ENCODE measurements at regions of chr13 and their contacts with region 1.

Region 1: GRCh38 chr13:40352380-40352778 is 314.1 kb downstream of the FOXO1 start:
- DNase-seq: peak; percentile 91 to 97
- ATAC-seq: peak; percentile 70 to 76
- H3K4me3 ChIP-seq: peak overlapping the region in 1 of 4 donors; percentile 29
- H3K27ac ChIP-seq: peak overlapping the region; percentile 88 to 98 (median 94)
- H3K4me1 ChIP-seq: peaks cover 35 to 36% of the 10 kb centered on the region in 2 donors
- H3K27me3 ChIP-seq: no peaks in the 10 kb centered on the region
- CTCF ChIP-seq: no peak
- POLR2A ChIP-seq: peak in 1 of 2 donors; percentile 22

Region 2: DNA sequence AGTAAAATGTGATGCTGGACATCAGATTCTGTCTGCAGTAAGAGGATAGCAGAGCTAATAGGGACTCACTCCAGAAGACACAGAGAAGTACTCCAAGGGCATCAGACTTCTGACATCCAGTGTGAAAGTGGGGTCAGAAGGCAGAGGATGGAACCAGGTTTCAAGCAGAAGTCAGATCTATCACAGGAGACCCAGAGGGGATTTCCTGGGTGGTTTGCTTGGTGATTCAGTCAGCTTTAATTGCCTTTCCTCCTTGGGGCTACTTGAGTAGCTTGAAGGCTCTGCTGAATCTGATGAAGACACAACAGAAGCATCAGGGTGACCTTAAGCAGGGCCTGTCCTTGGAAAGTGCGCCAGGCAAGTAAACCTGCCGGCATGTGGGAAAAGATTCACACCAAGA is 396.3 kb before region 1 on chr13:
- in situ Hi-C with region 1: no loop called
- intact Hi-C with region 1: no loop called
- DNase-seq: no peak
- ATAC-seq: no peak
- H3K4me3 ChIP-seq: no peak overlapping the region
- H3K27ac ChIP-seq: no peak overlapping the region
- H3K4me1 ChIP-seq: peaks cover 0 to 4% of the 10 kb centered on the region in 2 donors
- H3K27me3 ChIP-seq: no peaks in the 10 kb centered on the region
- CTCF ChIP-seq: no peak
- POLR2A ChIP-seq: no peak

Region 3: GRCh38 chr13:40236566-40237168 is 115.7 kb before region 1 on chr13:
- in situ Hi-C with region 1: loop called in 3 of 4 experiments (anchors 5 to 10 kb)
- intact Hi-C with region 1: loop called (anchors 1 kb)
- DNase-seq: peak; percentile 93 to 95
- ATAC-seq: peak; percentile 64 to 75
- H3K4me3 ChIP-seq: peak overlapping the region in 2 of 4 donors; percentile 21 to 26
- H3K27ac ChIP-seq: peak overlapping the region; percentile 97 to 99 (median 98)
- H3K4me1 ChIP-seq: peaks cover 50 to 56% of the 10 kb centered on the region in 2 donors
- H3K27me3 ChIP-seq: no peaks in the 10 kb centered on the region
- CTCF ChIP-seq: peak in 1 of 5 experiments; percentile 12
- POLR2A ChIP-seq: peak; percentile 73 to 86

Region 4: GRCh38 chr13:40251343-40252032 is 100.9 kb before region 1 on chr13:
- in situ Hi-C with region 1: no loop called
- intact Hi-C with region 1: loop called (anchors 5 kb)
- DNase-seq: no peak
- ATAC-seq: peak; percentile 17 to 55
- H3K4me3 ChIP-seq: no peak overlapping the region
- H3K27ac ChIP-seq: peak overlapping the region in 3 of 4 donors; percentile 39 to 59 (median 52)
- H3K4me1 ChIP-seq: peaks cover 6 to 9% of the 10 kb centered on the region in 2 donors
- H3K27me3 ChIP-seq: no peaks in the 10 kb centered on the region
- CTCF ChIP-seq: no peak
- POLR2A ChIP-seq: no peak

Region 5: GRCh38 chr13:40271931-40272775 is 80.2 kb before region 1 on chr13:
- in situ Hi-C with region 1: no loop called
- intact Hi-C with region 1: no loop called
- DNase-seq: peak; percentile 64 to 83
- ATAC-seq: peak; percentile 56 to 90
- H3K4me3 ChIP-seq: no peak overlapping the region
- H3K27ac ChIP-seq: peak overlapping the region; percentile 52 to 79 (median 72)
- H3K4me1 ChIP-seq: peaks cover 14 to 23% of the 10 kb centered on the region in 2 donors
- H3K27me3 ChIP-seq: no peaks in the 10 kb centered on the region
- CTCF ChIP-seq: no peak
- POLR2A ChIP-seq: no peak

Region 6: GRCh38 chr13:40401911-40402776 is 49.8 kb after region 1 on chr13:
- in situ Hi-C with region 1: no loop called
- intact Hi-C with region 1: loop called (anchors 2 kb)
- DNase-seq: peak; percentile 85 to 95
- ATAC-seq: peak; percentile 78 to 86
- H3K4me3 ChIP-seq: peak overlapping the region in 2 of 4 donors; percentile 10 to 25
- H3K27ac ChIP-seq: peak overlapping the region; percentile 48 to 75 (median 56)
- H3K4me1 ChIP-seq: peaks cover 32 to 42% of the 10 kb centered on the region in 2 donors
- H3K27me3 ChIP-seq: no peaks in the 10 kb centered on the region
- CTCF ChIP-seq: no peak
- POLR2A ChIP-seq: no peak

Region 7: DNA sequence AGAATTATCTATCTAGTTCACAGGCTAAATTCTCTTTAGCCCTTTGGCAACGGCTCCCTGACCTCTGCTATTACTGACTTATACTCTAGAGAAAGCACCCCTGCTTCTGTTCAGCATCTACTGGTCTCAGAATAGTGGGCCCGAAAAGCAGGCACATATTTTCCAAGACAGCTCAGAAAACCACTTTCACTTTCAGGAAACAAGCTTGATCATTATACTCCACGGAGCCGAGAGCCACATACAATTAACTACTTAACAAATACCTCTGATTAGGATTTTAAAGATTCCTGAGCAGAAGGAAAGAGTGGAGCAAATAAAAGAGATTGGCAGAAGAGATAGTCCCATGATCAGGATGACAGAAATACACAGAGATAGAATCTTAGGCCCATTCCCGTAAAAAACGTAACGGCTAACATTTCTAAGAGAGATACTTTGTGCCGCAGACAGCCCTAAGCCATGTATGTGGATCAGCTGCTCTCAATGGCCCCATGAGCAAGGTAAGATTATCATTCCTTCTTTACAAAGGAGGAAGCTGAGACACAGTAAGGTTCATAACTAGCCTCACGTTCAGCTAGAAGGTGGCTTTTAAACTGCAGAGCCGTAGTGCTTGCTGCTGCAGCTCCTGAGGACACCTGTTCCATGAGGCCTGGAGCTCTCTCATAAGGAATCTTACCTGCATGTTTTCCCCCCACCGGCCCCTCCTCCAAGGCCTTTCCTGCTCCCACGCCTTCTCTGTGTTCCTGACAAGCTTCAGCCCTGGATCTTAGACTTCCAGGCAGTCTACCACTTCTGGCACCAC is 86.8 kb after region 1 on chr13:
- in situ Hi-C with region 1: no loop called
- intact Hi-C with region 1: loop called (anchors 1 kb)
- DNase-seq: no peak
- ATAC-seq: peak; percentile 10 to 16
- H3K4me3 ChIP-seq: peak overlapping the region; percentile 24 to 35 (median 32)
- H3K27ac ChIP-seq: peak overlapping the region; percentile 72 to 79 (median 76)
- H3K4me1 ChIP-seq: peaks cover 48 to 54% of the 10 kb centered on the region in 2 donors
- H3K27me3 ChIP-seq: no peaks in the 10 kb centered on the region
- CTCF ChIP-seq: no peak
- POLR2A ChIP-seq: no peak

Region 8: DNA sequence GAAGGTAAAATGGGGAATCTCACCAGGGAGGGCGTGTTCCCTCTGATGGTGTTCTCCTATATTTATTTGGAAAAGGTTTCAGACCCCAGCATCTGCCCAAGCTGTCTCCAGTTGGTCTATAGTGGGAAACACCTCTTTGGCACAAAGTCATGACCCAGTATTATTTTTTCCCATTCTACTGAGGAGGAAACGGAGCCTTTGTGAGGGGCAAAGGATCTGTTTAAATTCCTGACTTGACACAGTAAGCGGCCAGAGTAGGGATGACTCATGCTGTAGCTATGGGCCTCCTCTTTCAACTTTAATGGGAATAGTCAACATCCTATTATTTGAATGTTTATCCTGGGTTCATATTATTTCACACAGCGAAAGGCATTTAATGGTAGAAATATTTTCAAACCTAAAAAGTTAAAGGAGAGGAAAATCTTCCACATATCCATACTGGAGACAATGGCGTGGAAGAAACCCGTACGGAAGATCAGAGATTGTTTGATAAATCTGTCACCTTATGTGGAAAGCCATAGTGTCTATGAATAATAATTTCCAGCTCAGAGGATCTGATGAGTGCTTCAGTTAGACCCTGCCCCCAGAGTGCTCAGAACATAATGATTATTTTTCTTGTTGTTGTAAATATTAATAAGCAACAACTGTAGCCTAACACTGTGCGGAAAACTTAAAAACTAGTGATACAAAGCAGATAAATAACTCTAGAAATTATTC is 188.1 kb after region 1 on chr13:
- in situ Hi-C with region 1: no loop called
- intact Hi-C with region 1: loop called (anchors 5 kb)
- DNase-seq: no peak
- ATAC-seq: no peak
- H3K4me3 ChIP-seq: no peak overlapping the region
- H3K27ac ChIP-seq: peak overlapping the region; percentile 30 to 60 (median 57)
- H3K4me1 ChIP-seq: peaks cover 15 to 24% of the 10 kb centered on the region in 2 donors
- H3K27me3 ChIP-seq: no peaks in the 10 kb centered on the region
- CTCF ChIP-seq: no peak
- POLR2A ChIP-seq: no peak

Region 9: GRCh38 chr13:40562975-40563349 is 210.6 kb after region 1 on chr13:
- in situ Hi-C with region 1: no loop called
- intact Hi-C with region 1: loop called (anchors 2 kb)
- DNase-seq: no peak
- ATAC-seq: no peak
- H3K4me3 ChIP-seq: no peak overlapping the region
- H3K27ac ChIP-seq: peak overlapping the region; percentile 72 to 78 (median 75)
- H3K4me1 ChIP-seq: peaks cover 85 to 89% of the 10 kb centered on the region in 2 donors
- H3K27me3 ChIP-seq: no peaks in the 10 kb centered on the region
- CTCF ChIP-seq: no peak
- POLR2A ChIP-seq: no peak

Region 10: GRCh38 chr13:41049480-41050440 is 697.4 kb after region 1 on chr13:
- in situ Hi-C with region 1: no loop called
- intact Hi-C with region 1: no loop called
- DNase-seq: no peak
- ATAC-seq: peak; percentile 75 to 85
- H3K4me3 ChIP-seq: no peak overlapping the region
- H3K27ac ChIP-seq: peak overlapping the region; percentile 8 to 65 (median 34)
- H3K4me1 ChIP-seq: peaks cover 56% of the 10 kb centered on the region in 2 donors
- H3K27me3 ChIP-seq: no peaks in the 10 kb centered on the region
- CTCF ChIP-seq: no peak
- POLR2A ChIP-seq: no peak

Measured in gastrocnemius medialis (tissue), 4 donors.